Thyroid gland (tissue), 4 donors: ENCODE measurements at regions of chr21 and their contacts with region 1.

Region 1: GRCh38 chr21:24093032-24093431 is 1514.2 kb downstream of the MRPL39 start:
- DNase-seq: no peak
- H3K4me3 ChIP-seq: no peak overlapping the region
- H3K27ac ChIP-seq: no peak overlapping the region
- H3K4me1 ChIP-seq: no peaks in the 10 kb centered on the region
- H3K27me3 ChIP-seq: no peaks in the 10 kb centered on the region
- CTCF ChIP-seq: no peak
- POLR2A ChIP-seq: no peak

Region 2: DNA sequence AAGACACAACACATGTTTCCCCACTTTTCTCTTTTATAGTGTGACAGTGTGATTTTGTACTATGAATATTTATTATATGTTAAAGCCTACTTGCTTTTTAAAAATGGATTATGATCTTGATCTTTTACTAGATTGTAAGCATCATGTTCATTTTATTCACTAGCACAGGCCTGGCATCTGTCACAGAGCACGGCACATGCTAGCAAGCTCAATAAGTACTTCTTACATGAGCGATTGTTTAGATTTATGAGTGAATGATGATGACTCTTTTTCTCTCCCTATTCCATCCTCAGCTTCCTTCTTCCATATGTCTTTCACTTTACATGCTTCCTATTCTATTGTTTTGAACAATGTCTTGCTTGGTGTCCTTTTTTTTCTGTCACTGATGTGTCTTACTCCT is 60.1 kb after region 1 on chr21:
- intact Hi-C with region 1: loop called (anchors 10 kb)
- DNase-seq: no peak
- H3K4me3 ChIP-seq: no peak overlapping the region
- H3K27ac ChIP-seq: no peak overlapping the region
- H3K4me1 ChIP-seq: no peaks in the 10 kb centered on the region
- H3K27me3 ChIP-seq: no peaks in the 10 kb centered on the region
- CTCF ChIP-seq: no peak
- POLR2A ChIP-seq: no peak

Region 3: DNA sequence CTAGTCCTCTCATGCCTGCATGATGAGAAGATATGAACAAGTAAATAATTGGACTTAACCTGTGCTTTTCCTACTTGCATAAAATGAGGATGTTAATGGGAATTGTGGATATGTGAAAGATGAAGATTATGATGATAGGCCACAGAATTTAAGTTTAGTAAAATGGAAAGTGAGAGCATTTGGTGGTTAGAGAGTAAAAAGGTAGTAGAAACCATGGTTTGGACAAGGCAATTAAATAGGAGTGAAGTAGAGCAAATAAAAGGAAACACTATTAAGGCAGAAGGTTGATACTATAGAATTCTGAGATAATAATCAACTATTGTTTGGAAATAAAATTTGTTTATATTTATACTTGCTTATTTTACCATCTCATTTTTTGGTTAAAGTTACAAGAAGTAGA is 351.7 kb after region 1 on chr21:
- intact Hi-C with region 1: no loop called
- DNase-seq: no peak
- H3K4me3 ChIP-seq: no peak overlapping the region
- H3K27ac ChIP-seq: no peak overlapping the region
- H3K4me1 ChIP-seq: no peaks in the 10 kb centered on the region
- H3K27me3 ChIP-seq: no peaks in the 10 kb centered on the region
- CTCF ChIP-seq: no peak
- POLR2A ChIP-seq: no peak